ENCODE measurements at regions of chr2 and their contacts with region 1.

Region 1: DNA sequence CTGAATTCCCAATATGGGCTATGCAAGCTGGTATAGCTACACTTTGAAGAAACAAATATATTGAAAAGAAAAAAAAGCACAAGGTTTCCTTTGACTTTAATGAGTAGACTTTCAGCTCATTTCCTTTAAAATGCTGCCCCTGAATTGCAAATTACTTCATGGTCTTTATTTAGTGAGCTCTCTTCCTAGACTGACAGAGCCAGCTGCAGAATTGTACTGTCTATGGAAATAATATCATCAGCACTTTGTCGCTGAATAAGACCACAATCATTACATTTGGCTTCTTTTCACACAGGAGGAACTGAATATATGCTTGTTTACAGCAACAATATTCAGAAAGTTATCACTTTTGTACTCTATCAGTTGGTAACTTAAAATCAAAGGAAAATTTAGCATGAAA is 41.7 kb downstream of the ARL5A start:
- DNase-seq: no peak
- CTCF ChIP-seq: no peak

Region 2: DNA sequence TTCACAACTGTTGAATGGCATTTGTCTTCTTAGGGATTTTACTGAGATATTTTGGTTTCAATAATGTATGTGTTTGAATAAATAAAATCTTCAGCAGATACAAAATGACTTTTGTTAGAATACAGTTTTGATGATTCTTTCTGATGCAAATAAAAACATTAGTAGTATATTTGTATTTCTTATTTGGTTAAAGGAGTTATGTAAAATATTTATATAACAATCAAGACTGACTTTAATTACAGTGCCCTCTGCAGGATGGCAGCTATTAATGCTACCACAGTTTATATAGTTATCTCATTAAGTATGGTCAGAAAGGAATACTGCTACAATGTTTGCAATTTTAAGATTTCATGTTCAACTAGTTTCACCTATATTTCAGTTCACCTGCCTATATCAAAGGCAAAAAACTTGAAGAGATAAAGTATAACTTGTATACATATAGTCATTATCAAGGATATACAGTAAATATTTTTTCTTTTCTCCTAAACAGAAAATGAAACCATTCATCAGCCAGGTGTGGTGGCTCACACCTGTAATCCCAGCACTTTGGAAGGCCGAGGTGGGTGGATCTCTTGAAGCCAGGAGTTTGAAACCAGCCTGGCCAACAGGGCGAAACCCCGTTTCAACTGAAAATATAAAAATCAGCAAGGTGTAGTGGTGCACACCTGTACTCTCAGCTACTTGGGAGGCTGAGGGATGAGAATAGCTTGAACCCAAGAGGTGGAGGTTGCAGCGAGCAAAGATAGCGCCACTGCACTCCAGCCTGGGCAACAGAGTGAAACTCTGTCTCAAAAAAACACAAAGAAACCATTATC is 22.0 kb after region 1 on chr2:
- CTCF ChIA-PET with region 1: interaction called, 18 read pairs
- POLR2A ChIA-PET with region 1: no interaction called
- DNase-seq: peak; percentile 23
- CTCF ChIP-seq: peak; percentile 34